Activated CD4-positive, alpha-beta memory T cell treated with anti-CD3 and anti-CD28 coated beads, Interleukin-2, amount 10 ng/mL, durations not matched to agents 7 days and 5 days (primary cell): ENCODE measurements at regions of chr9 and their contacts with region 1.

Region 1: DNA sequence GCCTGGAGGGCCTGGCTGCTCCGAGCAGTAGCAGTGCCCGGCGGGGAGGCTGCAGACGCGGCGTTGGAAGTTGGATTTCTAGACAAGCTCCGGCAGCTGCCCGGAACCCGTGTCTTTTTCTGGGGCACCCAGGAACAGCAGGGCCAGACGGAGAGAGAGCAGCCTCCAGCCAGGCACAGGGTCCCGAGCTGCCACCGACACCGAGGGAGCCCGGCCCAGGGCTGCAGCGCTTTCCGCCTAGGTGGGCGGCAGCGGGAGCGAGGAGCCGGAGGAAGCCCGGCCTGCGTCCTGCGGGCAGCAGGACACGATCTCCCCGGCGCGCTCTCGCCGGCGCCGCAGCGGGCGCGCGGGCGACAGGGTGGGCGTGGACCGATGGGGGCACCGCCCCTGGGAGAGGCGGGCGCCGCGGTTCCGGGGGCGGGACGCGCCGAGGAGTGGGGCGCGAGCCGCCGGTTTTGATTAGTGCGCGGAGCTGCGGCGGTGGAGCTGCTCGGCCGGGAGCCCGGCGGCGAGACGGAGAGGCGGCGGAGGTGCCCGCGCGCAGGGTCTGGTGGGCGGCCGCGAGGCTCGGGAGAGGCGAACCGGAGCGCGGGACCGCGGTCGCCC is at the start of gene UGCG:
- DNase-seq: peak; percentile 89
- H3K4me3 Mint-ChIP-seq: peak within 1 kb of the TSS; percentile 80
- H3K27ac Mint-ChIP-seq: peak within 1 kb of the TSS; percentile 80
- H3K4me1 Mint-ChIP-seq: peaks cover 22% of the 10 kb centered on the region
- H3K27me3 Mint-ChIP-seq: no peaks in the 10 kb centered on the region
- total RNA-seq, gene UGCG: 20.9 to 21.4 TPM

Region 2: DNA sequence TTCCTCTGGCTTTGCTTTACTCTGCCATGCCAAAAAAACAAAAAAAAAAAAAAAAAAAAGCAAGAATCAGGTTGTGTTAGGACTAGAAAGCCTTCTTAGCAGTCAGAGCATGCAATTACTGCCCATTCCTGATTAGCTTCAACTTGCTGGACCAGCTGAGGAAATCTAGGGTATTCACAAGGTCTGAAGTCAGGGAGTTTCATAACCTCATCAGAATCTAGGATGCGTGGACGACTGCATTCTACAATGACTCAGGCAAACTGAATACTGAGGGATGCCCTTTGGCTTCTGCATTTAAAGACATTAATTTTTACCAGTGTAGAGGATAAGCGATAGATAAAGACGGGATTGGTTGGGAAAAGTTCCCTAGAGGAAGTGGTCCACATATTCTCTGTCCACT is 62.5 kb before region 1 on chr9:
- CTCF ChIA-PET with region 1: no interaction called
- POLR2A ChIA-PET with region 1: no interaction called
- DNase-seq: no peak
- H3K4me3 Mint-ChIP-seq: no peak overlapping the region
- H3K27ac Mint-ChIP-seq: no peak overlapping the region
- H3K4me1 Mint-ChIP-seq: no peaks in the 10 kb centered on the region
- H3K27me3 Mint-ChIP-seq: peaks cover 12% of the 10 kb centered on the region

Region 3: GRCh38 chr9:111916234-111916645 is 19.8 kb after region 1 on chr9:
- CTCF ChIA-PET with region 1: interaction called, 3 read pairs
- POLR2A ChIA-PET with region 1: interaction called, 19 read pairs
- DNase-seq: peak; percentile 20
- H3K4me3 Mint-ChIP-seq: no peak overlapping the region
- H3K27ac Mint-ChIP-seq: no peak overlapping the region
- H3K4me1 Mint-ChIP-seq: peaks cover 31% of the 10 kb centered on the region
- H3K27me3 Mint-ChIP-seq: no peaks in the 10 kb centered on the region

Region 4: DNA sequence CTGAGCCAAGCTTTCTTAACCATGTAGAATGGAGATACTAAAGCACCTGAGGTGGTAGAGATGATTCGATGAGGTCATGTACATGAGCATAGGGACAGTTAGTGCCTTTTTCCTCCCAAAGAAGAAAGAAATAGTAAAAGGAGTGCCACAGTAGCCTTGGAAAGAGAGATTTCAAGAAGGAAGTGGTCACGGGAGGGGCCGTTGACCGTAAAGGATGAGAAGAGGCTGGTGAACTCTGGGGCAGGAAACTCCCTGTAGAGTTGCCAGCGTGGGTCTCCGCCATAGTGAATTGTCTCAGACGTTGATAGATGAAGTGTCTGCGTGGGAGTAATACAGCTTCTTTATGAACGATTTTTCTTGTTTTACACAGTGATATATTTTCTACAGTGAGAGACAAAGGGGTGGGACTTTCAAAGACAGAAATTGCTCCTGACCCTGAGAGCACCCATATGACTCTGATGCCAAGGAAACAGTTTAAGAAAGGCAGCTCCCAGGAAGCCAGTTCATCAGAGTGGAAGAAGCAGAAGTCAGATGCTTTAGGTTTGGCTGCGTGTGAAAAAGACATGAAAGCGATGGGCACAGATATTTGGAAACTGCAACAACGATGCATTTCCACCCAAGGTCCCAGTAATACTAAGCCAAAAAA is 41.4 kb after region 1 on chr9:
- CTCF ChIA-PET with region 1: no interaction called
- POLR2A ChIA-PET with region 1: interaction called, 11 read pairs
- DNase-seq: peak; percentile 57
- H3K4me3 Mint-ChIP-seq: peak overlapping the region; percentile 26
- H3K27ac Mint-ChIP-seq: peak overlapping the region; percentile 75
- H3K4me1 Mint-ChIP-seq: peaks cover 23% of the 10 kb centered on the region
- H3K27me3 Mint-ChIP-seq: no peaks in the 10 kb centered on the region

Region 5: DNA sequence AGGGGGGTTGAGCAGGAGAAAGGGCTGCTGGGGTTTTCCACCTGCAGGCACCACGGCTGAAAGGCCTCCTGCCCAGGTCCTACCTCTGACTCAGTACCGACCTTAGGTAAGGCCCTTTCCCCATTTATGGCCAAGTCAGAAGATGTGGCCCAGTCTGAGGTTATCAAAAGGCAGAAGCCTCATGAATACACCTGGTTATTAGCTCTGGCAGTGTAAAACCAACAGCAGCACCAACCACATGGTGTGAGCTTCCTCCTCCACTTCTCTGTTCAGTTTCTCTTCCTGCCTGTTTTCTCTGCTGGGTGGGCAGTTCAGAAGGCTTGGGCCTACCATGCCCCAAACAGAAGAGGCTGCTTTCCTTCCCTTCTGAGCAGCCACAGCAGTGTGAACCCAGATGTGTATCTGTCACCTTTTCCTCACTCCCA is 87.0 kb after region 1 on chr9:
- CTCF ChIA-PET with region 1: no interaction called
- POLR2A ChIA-PET with region 1: no interaction called
- DNase-seq: no peak
- H3K4me3 Mint-ChIP-seq: no peak overlapping the region
- H3K27ac Mint-ChIP-seq: no peak overlapping the region
- H3K4me1 Mint-ChIP-seq: peaks cover 26% of the 10 kb centered on the region
- H3K27me3 Mint-ChIP-seq: peaks cover 34% of the 10 kb centered on the region

Region 6: DNA sequence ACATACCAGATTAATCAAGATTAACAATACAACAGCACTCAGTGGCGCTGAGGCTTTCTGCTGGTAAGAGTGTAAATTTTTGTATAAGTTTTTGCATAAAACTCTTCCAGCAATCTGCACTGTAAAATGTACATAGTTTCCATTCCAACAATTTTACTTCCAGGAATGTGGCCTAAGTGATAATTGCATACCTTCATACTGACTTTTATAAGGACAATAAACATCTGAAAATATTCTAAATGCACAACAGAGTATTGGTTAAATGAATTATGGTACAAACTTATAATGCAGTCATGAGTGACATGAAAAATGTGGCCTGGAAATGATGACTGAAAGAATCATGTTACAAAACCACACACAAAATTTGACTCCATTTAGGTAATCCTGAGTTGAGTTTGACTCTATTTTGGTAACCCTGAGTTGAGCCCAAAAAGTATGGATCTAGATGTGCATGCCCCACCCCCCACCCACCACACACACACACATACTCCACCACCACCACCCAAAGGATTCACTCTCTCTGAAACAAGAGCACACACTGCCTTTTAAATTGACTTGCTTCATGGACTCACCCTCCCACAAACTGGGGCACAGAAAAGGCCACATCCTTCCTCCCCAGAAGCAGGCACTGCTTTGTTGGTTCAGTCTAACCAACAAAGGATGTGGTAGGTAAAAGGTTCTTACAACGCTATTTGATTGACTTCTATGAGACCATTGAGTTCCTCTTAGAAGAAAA is 141.0 kb after region 1 on chr9:
- CTCF ChIA-PET with region 1: no interaction called
- POLR2A ChIA-PET with region 1: interaction called, 11 read pairs
- DNase-seq: peak; percentile 87
- H3K4me3 Mint-ChIP-seq: peak overlapping the region; percentile 47
- H3K27ac Mint-ChIP-seq: peak overlapping the region; percentile 93
- H3K4me1 Mint-ChIP-seq: peaks cover 57% of the 10 kb centered on the region
- H3K27me3 Mint-ChIP-seq: peaks cover 13% of the 10 kb centered on the region

Region 7: DNA sequence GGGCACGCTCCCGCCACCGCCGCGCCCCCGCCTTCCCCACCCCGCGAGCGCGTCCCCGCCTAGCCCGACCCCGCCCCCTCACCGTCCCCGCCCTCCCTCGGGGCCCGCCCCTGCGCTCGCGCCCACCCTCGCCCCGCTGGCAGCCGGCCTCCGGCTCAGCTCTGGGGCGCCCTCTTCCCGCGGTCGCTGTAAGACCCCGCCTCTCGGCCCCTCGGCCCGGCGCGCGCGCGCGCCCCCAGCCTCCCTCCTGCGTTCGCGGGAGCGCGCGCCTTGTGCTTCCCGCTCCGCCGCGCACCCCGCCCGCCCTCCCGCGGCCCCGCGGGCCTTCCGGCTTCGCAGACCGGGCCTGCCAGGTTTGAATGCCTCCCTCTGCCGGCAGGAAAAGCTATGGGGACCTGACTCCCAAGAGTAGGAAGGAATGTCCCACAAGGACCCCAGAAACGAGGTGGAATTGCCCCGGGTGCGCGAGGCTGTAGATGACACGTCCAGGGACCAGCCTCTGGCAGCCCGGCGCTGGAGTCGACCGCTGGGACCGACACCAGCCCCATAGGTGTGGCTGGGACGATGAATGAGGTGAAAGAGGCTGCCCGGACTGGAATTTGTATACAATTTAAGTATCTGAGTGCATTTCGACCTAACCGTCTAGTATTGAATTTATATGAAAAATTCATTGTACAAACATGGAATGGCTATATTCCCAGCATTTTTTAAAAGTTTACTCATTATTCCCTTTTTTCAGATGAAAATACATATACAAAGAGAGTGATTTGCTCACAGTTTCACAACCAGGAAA is 437.4 kb after region 1 on chr9:
- CTCF ChIA-PET with region 1: no interaction called
- POLR2A ChIA-PET with region 1: interaction called, 17 read pairs
- DNase-seq: peak; percentile 95
- H3K4me3 Mint-ChIP-seq: peak overlapping the region; percentile 88
- H3K27ac Mint-ChIP-seq: peak overlapping the region; percentile 87
- H3K4me1 Mint-ChIP-seq: peaks cover 34% of the 10 kb centered on the region
- H3K27me3 Mint-ChIP-seq: no peaks in the 10 kb centered on the region

Region 8: DNA sequence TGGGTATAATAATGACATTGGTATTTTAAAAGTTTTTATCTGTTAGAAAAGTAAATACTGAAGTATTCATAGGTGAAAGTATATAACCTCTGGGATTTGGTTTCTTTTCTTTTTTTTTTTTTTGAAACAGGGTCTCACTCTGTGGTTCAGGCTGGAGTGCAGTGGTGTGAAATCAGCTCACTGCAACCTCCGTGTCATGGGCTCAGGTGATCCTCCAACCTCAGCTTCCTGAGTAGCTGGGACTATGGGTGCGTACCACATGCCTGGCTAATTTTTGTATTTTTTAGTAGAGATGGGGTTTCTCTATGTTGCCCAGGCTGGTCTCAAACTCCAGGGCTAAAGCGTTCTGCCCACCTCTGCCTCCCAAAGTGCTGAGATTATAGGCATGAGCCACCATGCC is 490.7 kb after region 1 on chr9:
- CTCF ChIA-PET with region 1: no interaction called
- POLR2A ChIA-PET with region 1: no interaction called
- DNase-seq: no peak
- H3K4me3 Mint-ChIP-seq: no peak overlapping the region
- H3K27ac Mint-ChIP-seq: no peak overlapping the region
- H3K4me1 Mint-ChIP-seq: peaks cover 22% of the 10 kb centered on the region
- H3K27me3 Mint-ChIP-seq: no peaks in the 10 kb centered on the region